ENCODE measurements at regions of chr11 and their contacts with region 1.

Region 1: DNA sequence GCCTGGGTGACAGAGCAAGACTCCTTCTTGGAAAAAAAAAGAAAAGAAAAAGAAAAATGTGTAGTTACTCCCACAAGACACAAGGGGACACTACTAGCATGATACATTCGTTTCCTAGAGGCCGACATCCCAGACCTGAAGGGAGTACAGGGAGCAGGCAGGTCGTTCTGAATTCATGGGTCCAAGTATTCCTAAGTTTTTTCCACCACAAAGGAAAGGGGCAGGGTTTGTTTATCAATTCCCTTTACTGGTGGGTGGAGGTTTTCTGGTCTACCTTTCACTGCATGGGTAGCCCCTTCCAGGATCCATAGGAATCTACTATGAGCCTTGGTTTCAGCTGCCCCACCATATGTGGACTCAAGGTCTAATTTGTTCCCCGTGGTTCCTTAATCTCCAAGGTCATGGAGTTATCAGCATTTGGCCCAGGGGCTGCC is 11.8 kb downstream of the TIGD3 start:
- DNase-seq: peak; percentile 48
- ATAC-seq: peak; percentile 72
- H3K4me3 Mint-ChIP-seq: no peak overlapping the region
- H3K27ac Mint-ChIP-seq: no peak overlapping the region
- H3K4me1 Mint-ChIP-seq: peaks cover 10% of the 10 kb centered on the region
- H3K27me3 Mint-ChIP-seq: no peaks in the 10 kb centered on the region

Region 2: DNA sequence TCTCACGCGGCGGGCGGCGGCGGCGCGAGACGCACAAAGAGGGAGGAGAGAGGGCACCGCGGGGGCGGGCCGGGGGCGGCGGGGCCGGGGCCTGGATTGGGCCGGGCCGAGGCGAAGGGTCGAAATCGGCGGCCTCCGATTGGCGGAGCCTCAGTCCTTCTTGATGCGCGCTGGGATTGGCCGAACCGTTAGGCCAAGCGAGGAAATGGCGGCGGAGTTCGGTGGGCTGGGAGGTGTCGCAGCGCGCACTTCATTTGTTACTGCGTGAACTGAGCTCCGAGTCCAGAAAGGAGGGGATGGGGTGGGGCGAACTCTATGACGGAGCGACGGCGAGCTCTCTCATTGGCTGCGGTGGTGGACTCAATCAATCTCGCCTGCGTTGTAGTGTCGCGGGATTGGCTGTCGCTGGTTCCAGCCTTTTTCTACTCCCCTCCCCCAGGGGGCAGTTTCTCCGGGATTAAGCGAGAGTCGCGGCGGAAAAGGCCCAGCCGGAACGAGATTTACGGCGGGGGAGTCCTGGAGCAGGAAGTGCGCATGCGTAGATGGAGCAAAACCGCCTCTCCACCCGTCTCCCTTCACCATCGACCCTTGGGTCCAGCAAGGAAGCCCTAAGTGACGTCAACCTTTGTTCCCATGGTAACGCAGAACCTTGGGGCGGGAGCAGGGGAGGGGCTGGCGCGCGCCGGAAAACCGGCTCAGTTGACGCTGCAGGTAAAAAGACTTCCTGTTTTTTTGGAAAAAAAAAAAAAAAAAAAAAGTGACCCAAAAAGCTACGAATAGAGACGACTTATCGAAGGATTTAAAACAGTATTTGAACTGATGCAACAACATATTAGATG is 587.6 kb before region 1 on chr11 and contains the start of gene SF1:
- CTCF ChIA-PET with region 1: no interaction called
- POLR2A ChIA-PET with region 1: no interaction called
- intact Hi-C with region 1: no loop called
- DNase-seq: peak; percentile 99
- ATAC-seq: peak; percentile 91
- H3K4me3 Mint-ChIP-seq: peak within 1 kb of the TSS; percentile 97
- H3K27ac Mint-ChIP-seq: peak within 1 kb of the TSS; percentile 99
- H3K4me1 Mint-ChIP-seq: peaks cover 57% of the 10 kb centered on the region
- H3K27me3 Mint-ChIP-seq: no peaks in the 10 kb centered on the region
- total RNA-seq, gene SF1: 318 to 362 TPM

Region 3: DNA sequence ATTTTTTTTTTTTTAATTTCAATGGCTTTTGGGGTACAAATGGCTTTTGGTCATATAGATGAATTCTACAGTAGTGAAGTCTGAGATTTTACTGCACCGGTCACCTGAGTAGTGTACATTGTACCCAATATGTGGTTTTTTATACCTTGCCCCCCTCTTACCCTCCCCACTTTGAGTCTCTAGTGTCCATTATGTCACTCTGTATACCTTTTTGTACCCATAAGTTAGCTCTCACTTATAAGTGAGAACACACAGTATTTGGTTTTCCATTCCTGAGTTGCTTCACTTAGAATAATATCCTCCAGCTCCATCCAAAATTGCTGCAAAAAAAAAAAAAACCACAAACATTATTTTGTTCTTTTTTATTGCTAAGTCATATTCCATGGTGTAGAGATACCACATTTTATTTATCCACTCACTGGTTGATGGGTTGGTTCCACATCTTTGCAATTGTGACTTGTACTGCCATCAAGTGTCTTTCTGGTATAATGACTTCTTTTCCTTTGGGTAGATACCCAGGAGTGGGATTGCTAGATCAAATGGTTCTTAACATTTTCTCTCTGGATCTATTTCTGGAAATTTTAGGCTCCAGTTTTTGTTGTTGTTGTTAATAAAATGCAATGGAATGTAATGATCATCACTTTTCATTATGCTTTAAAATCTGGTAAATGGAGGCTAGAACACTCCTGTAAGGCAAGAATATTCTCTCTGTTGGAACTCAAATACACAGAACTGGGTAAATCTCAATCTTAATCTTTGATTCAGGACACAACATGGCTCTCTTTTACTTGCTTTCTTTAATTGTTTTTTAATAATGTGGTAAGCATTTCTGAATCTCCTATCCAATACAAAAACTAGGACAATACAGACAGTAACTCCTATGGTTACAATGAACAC is 66.6 kb after region 1 on chr11:
- CTCF ChIA-PET with region 1: no interaction called
- POLR2A ChIA-PET with region 1: no interaction called
- intact Hi-C with region 1: loop called in 1 of 2 experiments (anchors 1 kb)
- DNase-seq: peak; percentile 2
- ATAC-seq: no peak
- H3K4me3 Mint-ChIP-seq: peak overlapping the region; percentile 18
- H3K27ac Mint-ChIP-seq: peak overlapping the region; percentile 35
- H3K4me1 Mint-ChIP-seq: peaks cover 86% of the 10 kb centered on the region
- H3K27me3 Mint-ChIP-seq: no peaks in the 10 kb centered on the region

Region 4: GRCh38 chr11:65506770-65507505 is 140.6 kb after region 1 on chr11:
- CTCF ChIA-PET with region 1: interaction called, 12 read pairs
- POLR2A ChIA-PET with region 1: interaction called, 4 read pairs
- intact Hi-C with region 1: loop called (anchors 1 kb)
- DNase-seq: peak; percentile 75
- ATAC-seq: peak; percentile 51
- H3K4me3 Mint-ChIP-seq: no peak overlapping the region
- H3K27ac Mint-ChIP-seq: no peak overlapping the region
- H3K4me1 Mint-ChIP-seq: peaks cover 60% of the 10 kb centered on the region
- H3K27me3 Mint-ChIP-seq: no peaks in the 10 kb centered on the region

Region 5: GRCh38 chr11:65588199-65589054 is 222.1 kb after region 1 on chr11:
- CTCF ChIA-PET with region 1: interaction called, 3 read pairs
- POLR2A ChIA-PET with region 1: no interaction called
- intact Hi-C with region 1: loop called in 1 of 2 experiments (anchors 5 kb)
- DNase-seq: peak; percentile 88
- ATAC-seq: peak; percentile 86
- H3K4me3 Mint-ChIP-seq: peak overlapping the region; percentile 43
- H3K27ac Mint-ChIP-seq: peak overlapping the region; percentile 90
- H3K4me1 Mint-ChIP-seq: peaks cover 39% of the 10 kb centered on the region
- H3K27me3 Mint-ChIP-seq: no peaks in the 10 kb centered on the region

Measured in activated CD4-positive, alpha-beta T cell treated with anti-CD3 and anti-CD28 coated beads for 36 hours (primary cell).